ENCODE measurements at regions of chr3 and their contacts with region 1.

Region 1: DNA sequence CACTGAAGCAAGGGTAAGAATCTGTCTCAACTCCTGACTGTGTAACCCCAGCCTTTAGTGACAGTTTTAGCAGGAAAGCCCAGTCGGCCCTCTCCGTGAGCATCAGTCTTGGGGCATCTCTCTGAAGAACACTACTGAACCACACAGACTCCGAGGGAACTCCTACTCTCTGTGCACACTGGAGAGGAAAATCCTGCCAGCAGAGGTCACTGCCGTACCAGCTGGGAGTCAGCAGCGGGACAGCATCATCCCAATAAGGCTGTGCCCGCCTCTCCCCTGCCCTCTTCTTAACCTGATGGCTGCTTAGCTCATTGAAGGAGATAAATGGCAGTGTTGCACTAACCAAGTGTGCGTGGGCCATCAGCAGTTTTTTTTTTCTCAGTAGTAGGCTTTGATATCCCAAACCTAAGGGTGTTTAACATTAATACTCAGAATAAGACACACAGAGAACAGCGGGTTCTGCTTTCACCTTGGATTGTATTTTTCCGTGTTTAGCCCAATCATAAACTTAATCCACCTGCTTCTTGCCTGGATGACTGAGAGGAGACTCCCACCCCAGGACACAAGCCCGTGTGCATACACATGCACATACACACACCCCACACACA is 26.6 kb upstream of the RASA2 start:
- DNase-seq: peak; percentile 94
- H3K4me3 Mint-ChIP-seq: no peak overlapping the region
- H3K27ac Mint-ChIP-seq: no peak overlapping the region
- H3K4me1 Mint-ChIP-seq: peaks cover 7% of the 10 kb centered on the region
- H3K27me3 Mint-ChIP-seq: no peaks in the 10 kb centered on the region

Region 2: DNA sequence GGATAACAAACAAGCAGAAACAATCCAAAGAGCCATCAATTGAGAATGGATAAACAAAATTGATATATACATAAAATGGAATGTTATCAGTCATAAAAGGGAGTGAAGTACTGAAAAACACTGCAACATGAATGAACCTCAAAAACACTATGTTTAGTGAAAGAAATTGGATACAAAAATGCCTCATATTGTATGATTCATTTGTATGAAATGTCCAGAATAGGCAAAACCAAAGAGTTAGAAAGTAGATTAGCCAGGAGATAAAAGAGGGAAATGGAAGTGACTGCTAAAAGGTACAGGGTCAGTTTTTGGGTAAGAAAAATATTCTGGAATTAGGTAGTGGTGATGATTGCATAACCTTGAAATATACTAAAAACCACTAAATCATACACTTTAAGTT is 528.4 kb before region 1 on chr3:
- CTCF ChIA-PET with region 1: no interaction called
- POLR2A ChIA-PET with region 1: no interaction called
- intact Hi-C with region 1: no loop called
- DNase-seq: no peak
- H3K4me3 Mint-ChIP-seq: no peak overlapping the region
- H3K27ac Mint-ChIP-seq: no peak overlapping the region
- H3K4me1 Mint-ChIP-seq: peaks cover 3% of the 10 kb centered on the region
- H3K27me3 Mint-ChIP-seq: peaks cover 23% of the 10 kb centered on the region

Region 3: GRCh38 chr3:141303481-141304223 is 156.5 kb before region 1 on chr3:
- CTCF ChIA-PET with region 1: interaction called, 200 read pairs
- POLR2A ChIA-PET with region 1: no interaction called
- intact Hi-C with region 1: no loop called
- DNase-seq: peak; percentile 56
- H3K4me3 Mint-ChIP-seq: no peak overlapping the region
- H3K27ac Mint-ChIP-seq: no peak overlapping the region
- H3K4me1 Mint-ChIP-seq: peaks cover 44% of the 10 kb centered on the region
- H3K27me3 Mint-ChIP-seq: no peaks in the 10 kb centered on the region

Region 4: GRCh38 chr3:141471160-141471559 is 11.0 kb after region 1 on chr3:
- CTCF ChIA-PET with region 1: interaction called, 42 read pairs
- POLR2A ChIA-PET with region 1: no interaction called
- intact Hi-C with region 1: no loop called
- DNase-seq: no peak
- H3K4me3 Mint-ChIP-seq: no peak overlapping the region
- H3K27ac Mint-ChIP-seq: no peak overlapping the region
- H3K4me1 Mint-ChIP-seq: peaks cover 9% of the 10 kb centered on the region
- H3K27me3 Mint-ChIP-seq: no peaks in the 10 kb centered on the region

Region 5: GRCh38 chr3:141553055-141553454 is 92.9 kb after region 1 on chr3:
- CTCF ChIA-PET with region 1: interaction called, 173 read pairs
- POLR2A ChIA-PET with region 1: no interaction called
- intact Hi-C with region 1: no loop called
- DNase-seq: no peak
- H3K4me3 Mint-ChIP-seq: peak overlapping the region; percentile 2
- H3K27ac Mint-ChIP-seq: peak overlapping the region; percentile 84
- H3K4me1 Mint-ChIP-seq: peaks cover 59% of the 10 kb centered on the region
- H3K27me3 Mint-ChIP-seq: no peaks in the 10 kb centered on the region

Region 6: DNA sequence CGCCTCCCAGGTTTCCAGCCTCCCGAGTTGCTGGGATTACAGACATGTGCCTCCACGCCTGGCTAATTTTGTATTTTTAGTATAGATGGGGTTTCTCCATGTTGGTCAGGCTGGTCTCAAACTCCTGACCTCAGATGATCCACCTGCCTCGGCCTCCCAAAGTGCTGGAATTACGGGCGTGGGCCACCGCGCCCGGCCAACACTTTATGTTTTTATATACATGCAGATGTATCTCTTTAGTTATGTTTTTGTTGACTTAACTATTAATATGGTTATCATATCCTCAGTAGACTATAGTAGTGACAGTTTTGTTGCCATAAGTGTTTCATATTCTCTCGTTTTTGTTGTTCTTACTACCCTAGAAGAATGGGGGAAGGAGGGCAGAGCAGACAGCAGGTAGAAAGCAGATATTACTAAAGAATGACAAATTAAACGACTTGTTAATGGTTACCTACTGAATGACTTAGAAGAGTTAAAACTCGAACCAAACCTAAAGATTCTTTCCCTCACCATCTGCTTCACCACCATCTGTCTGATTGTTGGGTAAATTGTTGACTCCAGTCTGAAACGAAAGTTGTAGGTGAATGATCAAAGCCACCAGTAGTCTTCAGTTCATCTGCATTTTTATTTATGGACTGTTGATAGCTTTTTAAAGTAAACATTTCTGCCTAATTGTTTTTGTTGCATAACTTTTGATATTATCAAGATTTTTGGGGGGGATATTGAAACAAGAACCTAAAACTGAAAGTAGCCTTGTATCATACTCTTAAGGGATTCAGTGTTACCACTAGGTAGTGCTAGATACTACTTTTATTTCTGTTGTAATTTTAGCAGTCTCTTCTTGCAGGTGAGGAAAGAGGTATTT is 115.9 kb after region 1 on chr3:
- CTCF ChIA-PET with region 1: interaction called, 15 read pairs
- POLR2A ChIA-PET with region 1: no interaction called
- intact Hi-C with region 1: no loop called
- DNase-seq: no peak
- H3K4me3 Mint-ChIP-seq: peak overlapping the region; percentile 5
- H3K27ac Mint-ChIP-seq: peak overlapping the region; percentile 53
- H3K4me1 Mint-ChIP-seq: peaks cover 15% of the 10 kb centered on the region
- H3K27me3 Mint-ChIP-seq: no peaks in the 10 kb centered on the region

Region 7: GRCh38 chr3:141738022-141738890 is 278.1 kb after region 1 on chr3 and contains the start of gene RNF7:
- CTCF ChIA-PET with region 1: interaction called, 3 read pairs
- POLR2A ChIA-PET with region 1: no interaction called
- intact Hi-C with region 1: loop called (anchors 5 kb)
- DNase-seq: peak; percentile 98
- H3K4me3 Mint-ChIP-seq: peak within 1 kb of the TSS; percentile 100
- H3K27ac Mint-ChIP-seq: peak within 1 kb of the TSS; percentile 99
- H3K4me1 Mint-ChIP-seq: peaks cover 33% of the 10 kb centered on the region
- H3K27me3 Mint-ChIP-seq: no peaks in the 10 kb centered on the region
- total RNA-seq, gene RNF7: 54.0 to 58.9 TPM

Region 8: GRCh38 chr3:141782454-141782853 is 322.3 kb after region 1 on chr3:
- CTCF ChIA-PET with region 1: no interaction called
- POLR2A ChIA-PET with region 1: no interaction called
- intact Hi-C with region 1: no loop called
- DNase-seq: peak; percentile 34
- H3K4me3 Mint-ChIP-seq: no peak overlapping the region
- H3K27ac Mint-ChIP-seq: no peak overlapping the region
- H3K4me1 Mint-ChIP-seq: no peaks in the 10 kb centered on the region
- H3K27me3 Mint-ChIP-seq: no peaks in the 10 kb centered on the region

Region 9: DNA sequence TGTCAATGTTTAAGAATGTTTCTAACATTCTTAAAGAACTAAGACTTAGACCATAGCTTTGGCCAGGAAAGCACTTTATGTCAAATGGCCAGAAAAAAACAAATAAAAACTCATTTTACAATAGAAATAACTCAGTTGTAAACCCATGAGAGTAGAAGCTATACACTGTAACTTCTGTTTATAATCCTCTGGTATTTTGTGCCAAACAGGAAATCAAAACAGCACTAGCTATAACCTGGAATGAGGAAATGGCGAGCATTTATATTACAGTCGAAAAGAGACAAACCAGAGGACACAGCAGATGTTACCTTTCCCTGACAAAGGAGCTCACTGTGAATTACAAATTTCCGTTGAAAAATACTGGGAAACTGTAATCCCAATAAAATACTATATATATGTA is 754.9 kb after region 1 on chr3:
- CTCF ChIA-PET with region 1: no interaction called
- POLR2A ChIA-PET with region 1: no interaction called
- intact Hi-C with region 1: no loop called
- DNase-seq: no peak
- H3K4me3 Mint-ChIP-seq: no peak overlapping the region
- H3K27ac Mint-ChIP-seq: no peak overlapping the region
- H3K4me1 Mint-ChIP-seq: no peaks in the 10 kb centered on the region
- H3K27me3 Mint-ChIP-seq: no peaks in the 10 kb centered on the region